ENCODE measurements at regions of chr6 and their contacts with region 1.

Region 1: DNA sequence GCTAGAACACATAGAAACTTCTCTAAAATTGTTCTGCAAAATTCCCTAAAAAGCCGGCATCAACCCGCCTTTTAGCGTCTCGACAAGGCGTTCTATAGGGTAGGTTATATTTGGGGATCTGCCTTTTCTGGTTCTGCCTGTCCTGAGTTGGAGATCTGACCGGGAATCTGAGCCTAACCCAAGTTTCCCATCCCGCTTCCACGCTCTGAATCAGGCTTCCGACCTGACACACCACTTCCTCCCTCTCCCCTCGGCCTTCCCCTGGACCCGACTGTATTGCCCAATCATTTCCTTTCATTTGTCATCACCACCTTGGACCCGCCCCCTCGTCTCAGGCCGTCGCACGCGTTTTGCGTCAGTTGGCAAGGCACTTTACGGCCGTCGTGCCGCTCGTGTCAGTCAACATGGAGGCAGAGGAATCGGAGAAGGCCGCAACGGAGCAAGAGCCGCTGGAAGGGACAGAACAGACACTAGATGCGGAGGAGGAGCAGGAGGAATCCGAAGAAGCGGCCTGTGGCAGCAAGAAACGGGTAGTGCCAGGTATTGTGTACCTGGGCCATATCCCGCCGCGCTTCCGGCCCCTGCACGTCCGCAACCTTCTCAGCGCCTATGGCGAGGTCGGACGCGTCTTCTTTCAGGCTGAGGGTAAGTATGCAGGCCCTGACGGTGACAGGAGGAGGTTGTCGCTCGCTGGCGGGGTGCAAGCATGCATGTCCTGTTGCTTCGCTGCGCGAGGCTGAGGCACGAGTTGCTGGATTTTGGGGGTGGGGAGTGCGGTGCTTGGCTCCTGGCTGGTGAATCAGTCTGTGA is at the start of gene ABT1:
- DNase-seq: peak; percentile 87 to 96 (median 95)
- ATAC-seq: peak; percentile 95
- H3K4me3 ChIP-seq: peak within 1 kb of the TSS; percentile 81
- H3K4me3 Mint-ChIP-seq: no peak within 1 kb of the TSS
- H3K27ac ChIP-seq: peak within 1 kb of the TSS; percentile 89
- H3K27ac Mint-ChIP-seq: peak within 1 kb of the TSS in 1 of 9 donors; percentile 92
- H3K4me1 ChIP-seq: peaks cover 17 to 22% of the 10 kb centered on the region in 2 donors
- H3K4me1 Mint-ChIP-seq: peaks cover 5 to 20% (median 10%) of the 10 kb centered on the region in 7 donors
- H3K27me3 ChIP-seq: peaks cover 8 to 14% of the 10 kb centered on the region in 2 donors
- H3K27me3 Mint-ChIP-seq: peaks cover 3 to 28% (median 16%) of the 10 kb centered on the region in 5 donors
- total RNA-seq, gene ABT1: 23.3 to 37.5 (median 35.0) TPM

Region 2: DNA sequence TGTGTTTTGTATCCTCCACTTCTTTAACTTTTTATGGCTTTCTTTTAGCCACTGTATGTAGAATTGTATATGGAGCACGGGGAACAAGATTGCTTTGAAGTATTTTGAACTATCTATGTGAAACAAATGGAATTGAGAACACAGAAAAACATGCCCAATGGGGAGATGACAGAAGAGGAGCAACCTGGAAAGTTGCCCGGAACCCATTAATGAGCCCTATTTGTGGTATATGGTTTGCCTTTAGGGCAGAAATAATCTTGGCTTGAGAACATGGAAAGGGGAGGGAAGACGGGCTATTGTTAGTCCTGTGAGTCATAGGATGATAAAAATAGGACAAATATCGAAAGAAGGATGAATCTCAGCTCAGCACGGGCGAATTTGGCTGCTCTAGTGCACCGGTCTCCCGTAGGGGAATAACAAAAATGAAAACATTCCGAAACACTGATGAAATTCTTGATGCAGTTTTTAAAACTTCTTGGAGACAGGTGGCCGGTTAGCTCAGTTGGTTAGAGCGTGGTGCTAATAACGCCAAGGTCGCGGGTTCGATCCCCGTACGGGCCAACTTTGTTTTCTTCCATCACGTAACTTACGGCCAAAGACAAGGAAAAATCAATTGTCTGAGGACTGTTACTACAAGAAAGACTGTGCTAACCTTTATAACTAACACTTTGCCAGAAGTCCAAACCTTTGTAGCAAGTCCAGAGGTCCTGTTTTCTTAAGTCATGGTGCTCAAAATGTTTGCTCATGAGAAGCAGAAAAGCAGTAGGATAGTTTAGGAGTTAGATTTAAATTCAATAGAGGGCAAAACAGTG is 42.9 kb before region 1 on chr6:
- CTCF ChIA-PET with region 1: interaction called, 5 read pairs
- POLR2A ChIA-PET with region 1: interaction called, 4 read pairs
- intact Hi-C with region 1: loop called (anchors 1 kb)
- DNase-seq: peak; percentile 44 to 86 (median 83)
- ATAC-seq: peak; percentile 66
- H3K4me3 ChIP-seq: peak overlapping the region; percentile 75
- H3K4me3 Mint-ChIP-seq: no peak overlapping the region
- H3K27ac ChIP-seq: peak overlapping the region; percentile 65
- H3K27ac Mint-ChIP-seq: no peak overlapping the region
- H3K4me1 ChIP-seq: peaks cover 7 to 18% of the 10 kb centered on the region in 2 donors
- H3K4me1 Mint-ChIP-seq: peaks cover 12 to 35% (median 24%) of the 10 kb centered on the region in 7 donors
- H3K27me3 ChIP-seq: no peaks in the 10 kb centered on the region
- H3K27me3 Mint-ChIP-seq: peaks cover 0 to 2% (median 0%) of the 10 kb centered on the region in 5 donors

Region 3: GRCh38 chr6:26576929-26577719 is 19.7 kb before region 1 on chr6:
- CTCF ChIA-PET with region 1: interaction called, 25 read pairs
- POLR2A ChIA-PET with region 1: interaction called, 25 read pairs
- intact Hi-C with region 1: loop called (anchors 1 kb)
- DNase-seq: peak in 8 of 9 donors; percentile 41 to 69 (median 58)
- ATAC-seq: peak; percentile 58
- H3K4me3 ChIP-seq: peak overlapping the region; percentile 47
- H3K4me3 Mint-ChIP-seq: peak overlapping the region; percentile 75 to 89 (median 86)
- H3K27ac ChIP-seq: no peak overlapping the region
- H3K27ac Mint-ChIP-seq: peak overlapping the region; percentile 76 to 97 (median 87)
- H3K4me1 ChIP-seq: peaks cover 0 to 4% of the 10 kb centered on the region in 2 donors
- H3K4me1 Mint-ChIP-seq: peaks cover 11 to 34% (median 24%) of the 10 kb centered on the region in 7 donors
- H3K27me3 ChIP-seq: no peaks in the 10 kb centered on the region
- H3K27me3 Mint-ChIP-seq: peaks cover 0 to 16% (median 0%) of the 10 kb centered on the region in 5 donors

Region 4: GRCh38 chr6:27742833-27743573 is 1146.2 kb after region 1 on chr6:
- CTCF ChIA-PET with region 1: no interaction called
- POLR2A ChIA-PET with region 1: no interaction called
- intact Hi-C with region 1: loop called in 1 of 2 experiments (anchors 1 kb)
- DNase-seq: no peak
- ATAC-seq: no peak
- H3K4me3 ChIP-seq: no peak overlapping the region
- H3K4me3 Mint-ChIP-seq: no peak overlapping the region
- H3K27ac ChIP-seq: no peak overlapping the region
- H3K27ac Mint-ChIP-seq: no peak overlapping the region
- H3K4me1 ChIP-seq: no peaks in the 10 kb centered on the region
- H3K4me1 Mint-ChIP-seq: peaks cover 2 to 23% (median 7%) of the 10 kb centered on the region in 7 donors
- H3K27me3 ChIP-seq: peaks cover 0 to 7% of the 10 kb centered on the region in 2 donors
- H3K27me3 Mint-ChIP-seq: peaks cover 33 to 53% (median 34%) of the 10 kb centered on the region in 5 donors

Region 5: DNA sequence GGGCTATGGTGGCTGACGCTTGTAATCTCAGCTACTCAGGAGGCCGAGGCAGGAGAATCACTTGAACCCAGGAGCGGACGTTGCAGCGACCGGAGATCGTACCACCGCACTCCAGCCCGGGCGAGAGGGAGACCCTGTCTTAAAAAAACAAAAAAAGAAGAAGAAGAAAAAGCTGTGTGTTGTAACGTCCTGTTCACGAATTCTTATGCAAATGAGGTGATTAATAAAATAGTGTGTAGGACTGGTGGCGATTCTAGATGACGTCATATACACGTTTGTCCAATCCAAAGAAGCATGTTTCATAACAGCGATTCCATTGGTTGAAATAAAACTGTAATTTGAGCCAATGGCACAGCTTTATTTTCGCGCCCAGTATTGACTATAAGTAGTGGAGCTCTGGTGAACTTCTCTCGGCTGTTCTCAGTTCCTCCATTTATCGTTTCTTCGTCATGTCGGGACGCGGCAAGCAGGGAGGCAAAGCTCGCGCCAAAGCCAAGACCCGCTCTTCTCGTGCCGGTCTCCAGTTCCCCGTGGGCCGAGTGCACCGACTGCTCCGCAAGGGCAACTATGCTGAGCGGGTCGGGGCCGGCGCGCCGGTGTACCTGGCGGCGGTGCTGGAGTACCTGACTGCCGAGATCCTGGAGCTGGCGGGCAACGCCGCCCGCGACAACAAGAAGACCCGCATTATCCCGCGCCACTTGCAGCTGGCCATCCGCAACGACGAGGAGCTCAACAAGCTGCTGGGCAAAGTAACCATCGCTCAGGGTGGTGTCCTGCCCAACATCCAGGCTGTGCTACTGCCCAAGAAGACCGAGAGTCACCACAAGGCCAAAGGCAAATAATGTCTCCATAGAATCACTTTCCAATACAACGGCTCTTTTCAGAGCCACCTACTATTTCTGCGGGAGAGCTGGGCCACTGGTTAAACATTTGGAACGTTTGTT is 1268.4 kb after region 1 on chr6:
- CTCF ChIA-PET with region 1: interaction called, 3 read pairs
- POLR2A ChIA-PET with region 1: no interaction called
- intact Hi-C with region 1: loop called (anchors 1 to 10 kb)
- DNase-seq: peak; percentile 56 to 93 (median 89)
- ATAC-seq: peak; percentile 85
- H3K4me3 ChIP-seq: peak overlapping the region; percentile 74
- H3K4me3 Mint-ChIP-seq: peak overlapping the region; percentile 85 to 99 (median 97)
- H3K27ac ChIP-seq: peak overlapping the region; percentile 71
- H3K27ac Mint-ChIP-seq: peak overlapping the region; percentile 88 to 98 (median 95)
- H3K4me1 ChIP-seq: peaks cover 8 to 25% of the 10 kb centered on the region in 2 donors
- H3K4me1 Mint-ChIP-seq: peaks cover 22 to 64% (median 46%) of the 10 kb centered on the region in 7 donors
- H3K27me3 ChIP-seq: no peaks in the 10 kb centered on the region
- H3K27me3 Mint-ChIP-seq: peaks cover 0 to 16% (median 0%) of the 10 kb centered on the region in 5 donors